Naive thymus-derived CD4-positive, alpha-beta T cell (primary cell): ENCODE measurements at regions of chr14 and their contacts with region 1.

Region 1: GRCh38 chr14:67619446-67620216 is at the start of gene ARG2:
- DNase-seq: peak; percentile 92 to 98 (median 95)
- ATAC-seq: peak; percentile 95
- H3K4me3 ChIP-seq: peak within 1 kb of the TSS; percentile 93
- H3K4me3 Mint-ChIP-seq: peak within 1 kb of the TSS; percentile 89 to 93 (median 90)
- H3K27ac ChIP-seq: peak within 1 kb of the TSS; percentile 82
- H3K27ac Mint-ChIP-seq: peak within 1 kb of the TSS; percentile 70 to 97 (median 94)
- H3K4me1 ChIP-seq: peaks cover 12 to 18% of the 10 kb centered on the region in 2 donors
- H3K4me1 Mint-ChIP-seq: peaks cover 21 to 42% (median 37%) of the 10 kb centered on the region in 7 donors
- H3K27me3 ChIP-seq: no peaks in the 10 kb centered on the region
- H3K27me3 Mint-ChIP-seq: peaks cover 0 to 23% (median 0%) of the 10 kb centered on the region in 5 donors
- total RNA-seq, gene ARG2: 0.46 to 5.1 (median 3.2) TPM

Region 2: DNA sequence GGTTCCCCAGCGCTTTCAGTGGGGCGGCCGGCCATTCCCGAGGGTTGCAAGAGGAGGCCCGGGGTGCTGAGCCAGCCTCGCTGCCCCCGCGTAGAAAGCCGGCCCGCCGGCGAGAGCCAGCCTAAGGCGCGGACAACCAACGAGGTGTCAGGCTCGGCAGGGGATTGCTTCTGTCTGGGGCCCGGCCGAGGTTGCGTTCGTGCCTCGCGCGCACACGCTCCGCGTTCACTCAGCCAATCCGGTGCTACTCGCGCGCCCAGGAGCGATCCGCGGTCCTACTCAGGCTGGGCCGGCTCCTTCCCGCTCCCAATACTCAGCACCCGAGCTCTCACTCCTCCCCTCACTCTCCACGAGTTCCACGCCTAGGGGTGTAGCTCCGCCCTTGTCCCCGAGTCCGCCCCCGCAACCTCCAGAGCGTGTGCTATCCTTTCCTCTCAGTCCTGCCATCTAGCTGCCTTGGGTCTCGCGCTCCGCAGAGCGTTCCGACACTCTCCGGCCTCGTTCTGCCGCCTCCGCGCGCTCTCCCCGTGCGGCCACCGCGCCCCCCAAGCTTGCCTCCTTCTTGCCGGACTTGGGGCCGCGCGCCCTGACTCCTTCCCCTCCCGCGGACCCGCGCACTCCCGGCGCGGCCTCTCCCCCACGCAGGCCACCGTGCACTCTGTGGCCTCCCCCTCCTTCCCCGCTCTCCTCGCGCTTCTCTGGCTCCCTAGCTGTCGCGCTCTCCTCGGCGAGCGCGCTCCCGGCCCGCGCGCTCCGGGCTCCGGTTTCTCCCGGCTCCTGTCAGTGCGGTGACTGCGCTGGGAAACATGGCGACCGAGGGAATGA is 1111.7 kb before region 1 on chr14 and contains the start of gene GPHN:
- CTCF ChIA-PET with region 1: no interaction called
- POLR2A ChIA-PET with region 1: no interaction called
- intact Hi-C with region 1: loop called in 1 of 2 experiments (anchors 1 kb)
- DNase-seq: peak; percentile 62 to 87 (median 82)
- ATAC-seq: peak; percentile 93
- H3K4me3 ChIP-seq: peak within 1 kb of the TSS; percentile 78
- H3K4me3 Mint-ChIP-seq: peak within 1 kb of the TSS; percentile 94 to 100 (median 99)
- H3K27ac ChIP-seq: peak within 1 kb of the TSS; percentile 70
- H3K27ac Mint-ChIP-seq: peak within 1 kb of the TSS; percentile 71 to 96 (median 91)
- H3K4me1 ChIP-seq: peaks cover 6 to 7% of the 10 kb centered on the region in 2 donors
- H3K4me1 Mint-ChIP-seq: peaks cover 16 to 42% (median 34%) of the 10 kb centered on the region in 7 donors
- H3K27me3 ChIP-seq: no peaks in the 10 kb centered on the region
- H3K27me3 Mint-ChIP-seq: peaks cover 0 to 29% (median 0%) of the 10 kb centered on the region in 5 donors
- total RNA-seq, gene GPHN: 11.8 to 28.1 (median 14.8) TPM

Region 3: GRCh38 chr14:67396501-67396900 is 223.1 kb before region 1 on chr14:
- CTCF ChIA-PET with region 1: no interaction called
- POLR2A ChIA-PET with region 1: no interaction called
- intact Hi-C with region 1: no loop called
- DNase-seq: no peak
- ATAC-seq: no peak
- H3K4me3 ChIP-seq: no peak overlapping the region
- H3K4me3 Mint-ChIP-seq: no peak overlapping the region
- H3K27ac ChIP-seq: no peak overlapping the region
- H3K27ac Mint-ChIP-seq: no peak overlapping the region
- H3K4me1 ChIP-seq: no peaks in the 10 kb centered on the region
- H3K4me1 Mint-ChIP-seq: peaks cover 0 to 9% (median 7%) of the 10 kb centered on the region in 7 donors
- H3K27me3 ChIP-seq: no peaks in the 10 kb centered on the region
- H3K27me3 Mint-ChIP-seq: peaks cover 0 to 9% (median 0%) of the 10 kb centered on the region in 5 donors

Region 4: GRCh38 chr14:67426983-67427606 is 192.5 kb before region 1 on chr14:
- CTCF ChIA-PET with region 1: interaction called, 4 read pairs
- POLR2A ChIA-PET with region 1: no interaction called
- intact Hi-C with region 1: loop called (anchors 1 kb)
- DNase-seq: peak; percentile 55 to 81 (median 74)
- ATAC-seq: peak; percentile 91
- H3K4me3 ChIP-seq: no peak overlapping the region
- H3K4me3 Mint-ChIP-seq: no peak overlapping the region
- H3K27ac ChIP-seq: no peak overlapping the region
- H3K27ac Mint-ChIP-seq: no peak overlapping the region
- H3K4me1 ChIP-seq: no peaks in the 10 kb centered on the region
- H3K4me1 Mint-ChIP-seq: peaks cover 0 to 8% (median 0%) of the 10 kb centered on the region in 7 donors
- H3K27me3 ChIP-seq: no peaks in the 10 kb centered on the region
- H3K27me3 Mint-ChIP-seq: peaks cover 6 to 36% (median 16%) of the 10 kb centered on the region in 5 donors

Region 5: DNA sequence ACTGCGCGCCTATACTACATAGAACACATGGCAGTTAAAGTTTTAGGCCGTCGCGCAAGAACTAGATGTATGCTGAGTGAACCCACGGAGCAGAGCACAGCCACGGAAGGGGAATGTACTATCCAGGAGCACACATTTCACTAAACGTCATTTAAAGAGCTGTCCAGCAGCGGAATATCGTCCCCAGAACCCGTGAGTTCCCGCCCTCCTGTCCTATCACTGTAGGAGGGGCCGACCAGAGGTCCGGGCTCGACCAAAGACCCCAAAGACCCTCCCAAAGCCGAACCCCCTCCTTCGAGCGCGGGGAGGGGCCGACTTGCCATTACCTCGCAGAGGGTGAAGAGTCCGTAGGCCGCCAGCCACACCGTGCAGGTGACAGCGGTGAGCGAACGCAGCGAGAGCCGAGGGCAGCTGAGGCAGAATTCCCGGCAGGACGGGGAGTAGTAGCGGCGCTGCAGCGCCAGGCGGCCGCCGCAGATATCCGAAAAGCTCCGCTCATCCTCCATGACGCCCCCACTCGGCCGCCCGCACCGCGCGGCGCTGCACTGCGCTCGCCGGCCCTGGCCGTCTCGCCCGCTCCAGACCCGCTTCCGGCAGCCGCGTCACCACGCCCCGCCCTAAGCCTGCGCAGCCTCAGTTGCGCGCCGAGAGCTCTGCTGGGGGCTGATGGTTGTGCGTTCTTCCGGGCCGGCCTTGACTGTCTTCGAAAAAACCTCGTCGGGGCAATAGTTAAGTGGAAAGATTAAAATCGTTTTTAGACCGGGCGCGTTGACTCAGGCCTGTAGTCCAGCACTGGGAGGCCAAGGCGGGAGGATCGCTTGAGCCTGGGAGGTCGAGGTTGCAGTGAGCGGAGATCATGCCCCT is 19.7 kb before region 1 on chr14 and contains the start of gene PIGH:
- CTCF ChIA-PET with region 1: interaction called, 13 read pairs
- POLR2A ChIA-PET with region 1: interaction called, 17 read pairs
- intact Hi-C with region 1: loop called (anchors 1 kb)
- DNase-seq: peak; percentile 89 to 96 (median 94)
- ATAC-seq: peak; percentile 98
- H3K4me3 ChIP-seq: peak within 1 kb of the TSS; percentile 70
- H3K4me3 Mint-ChIP-seq: peak within 1 kb of the TSS; percentile 87 to 100 (median 98)
- H3K27ac ChIP-seq: peak within 1 kb of the TSS; percentile 86
- H3K27ac Mint-ChIP-seq: peak within 1 kb of the TSS; percentile 87 to 99 (median 97)
- H3K4me1 ChIP-seq: peaks cover 16 to 22% of the 10 kb centered on the region in 2 donors
- H3K4me1 Mint-ChIP-seq: peaks cover 26 to 57% (median 46%) of the 10 kb centered on the region in 7 donors
- H3K27me3 ChIP-seq: no peaks in the 10 kb centered on the region
- H3K27me3 Mint-ChIP-seq: peaks cover 0 to 10% (median 0%) of the 10 kb centered on the region in 5 donors
- total RNA-seq, gene PIGH: 14.3 to 42.1 (median 34.5) TPM

Region 6: GRCh38 chr14:67666750-67667449 is 47.3 kb after region 1 on chr14:
- CTCF ChIA-PET with region 1: interaction called, 20 read pairs
- POLR2A ChIA-PET with region 1: interaction called, 3 read pairs
- intact Hi-C with region 1: loop called (anchors 1 kb)
- DNase-seq: peak in 7 of 9 donors; percentile 43 to 64 (median 52)
- ATAC-seq: peak; percentile 88
- H3K4me3 ChIP-seq: no peak overlapping the region
- H3K4me3 Mint-ChIP-seq: peak overlapping the region in 2 of 10 donors; percentile 21 to 23
- H3K27ac ChIP-seq: no peak overlapping the region
- H3K27ac Mint-ChIP-seq: peak overlapping the region; percentile 14 to 88 (median 58)
- H3K4me1 ChIP-seq: peaks cover 5 to 7% of the 10 kb centered on the region in 2 donors
- H3K4me1 Mint-ChIP-seq: peaks cover 32 to 75% (median 63%) of the 10 kb centered on the region in 7 donors
- H3K27me3 ChIP-seq: no peaks in the 10 kb centered on the region
- H3K27me3 Mint-ChIP-seq: no peaks in the 10 kb centered on the region

Region 7: DNA sequence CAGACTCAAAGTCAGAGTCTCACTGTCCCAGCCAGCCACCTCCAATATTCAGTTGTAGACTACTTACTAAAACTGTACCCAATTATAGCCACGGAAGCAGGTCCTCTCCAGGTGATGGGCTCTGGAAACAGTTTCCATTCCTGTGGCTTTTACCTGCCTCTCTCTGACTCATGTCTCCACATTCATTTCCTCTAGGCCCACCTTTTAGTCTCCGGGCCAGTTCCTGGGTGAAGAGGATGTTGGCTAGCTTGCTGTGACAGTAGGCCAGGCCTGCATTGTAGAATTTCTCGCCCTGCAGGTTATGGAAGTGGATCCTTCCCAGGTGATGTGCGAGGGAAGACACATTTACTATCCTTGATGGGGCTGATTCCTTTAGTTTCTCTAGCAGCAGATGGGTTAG is 70.4 kb after region 1 on chr14:
- CTCF ChIA-PET with region 1: interaction called, 11 read pairs
- POLR2A ChIA-PET with region 1: interaction called, 5 read pairs
- intact Hi-C with region 1: loop called (anchors 1 kb)
- DNase-seq: no peak
- ATAC-seq: no peak
- H3K4me3 ChIP-seq: no peak overlapping the region
- H3K4me3 Mint-ChIP-seq: no peak overlapping the region
- H3K27ac ChIP-seq: no peak overlapping the region
- H3K27ac Mint-ChIP-seq: peak overlapping the region in 1 of 9 donors; percentile 25
- H3K4me1 ChIP-seq: peaks cover 0 to 3% of the 10 kb centered on the region in 2 donors
- H3K4me1 Mint-ChIP-seq: peaks cover 8 to 33% (median 22%) of the 10 kb centered on the region in 7 donors
- H3K27me3 ChIP-seq: no peaks in the 10 kb centered on the region
- H3K27me3 Mint-ChIP-seq: no peaks in the 10 kb centered on the region

Region 8: GRCh38 chr14:67704484-67705089 is 85.0 kb after region 1 on chr14:
- CTCF ChIA-PET with region 1: interaction called, 50 read pairs
- POLR2A ChIA-PET with region 1: interaction called, 6 read pairs
- intact Hi-C with region 1: loop called (anchors 1 kb)
- DNase-seq: peak in 7 of 9 donors; percentile 29 to 63 (median 52)
- ATAC-seq: peak; percentile 93
- H3K4me3 ChIP-seq: no peak overlapping the region
- H3K4me3 Mint-ChIP-seq: no peak overlapping the region
- H3K27ac ChIP-seq: no peak overlapping the region
- H3K27ac Mint-ChIP-seq: peak overlapping the region in 1 of 9 donors; percentile 38
- H3K4me1 ChIP-seq: no peaks in the 10 kb centered on the region
- H3K4me1 Mint-ChIP-seq: peaks cover 0 to 2% (median 0%) of the 10 kb centered on the region in 7 donors
- H3K27me3 ChIP-seq: no peaks in the 10 kb centered on the region
- H3K27me3 Mint-ChIP-seq: peaks cover 0 to 8% (median 0%) of the 10 kb centered on the region in 5 donors